CD4-positive, alpha-beta memory T cell (primary cell): ENCODE measurements at regions of chr5 and their contacts with region 1.

Region 1: DNA sequence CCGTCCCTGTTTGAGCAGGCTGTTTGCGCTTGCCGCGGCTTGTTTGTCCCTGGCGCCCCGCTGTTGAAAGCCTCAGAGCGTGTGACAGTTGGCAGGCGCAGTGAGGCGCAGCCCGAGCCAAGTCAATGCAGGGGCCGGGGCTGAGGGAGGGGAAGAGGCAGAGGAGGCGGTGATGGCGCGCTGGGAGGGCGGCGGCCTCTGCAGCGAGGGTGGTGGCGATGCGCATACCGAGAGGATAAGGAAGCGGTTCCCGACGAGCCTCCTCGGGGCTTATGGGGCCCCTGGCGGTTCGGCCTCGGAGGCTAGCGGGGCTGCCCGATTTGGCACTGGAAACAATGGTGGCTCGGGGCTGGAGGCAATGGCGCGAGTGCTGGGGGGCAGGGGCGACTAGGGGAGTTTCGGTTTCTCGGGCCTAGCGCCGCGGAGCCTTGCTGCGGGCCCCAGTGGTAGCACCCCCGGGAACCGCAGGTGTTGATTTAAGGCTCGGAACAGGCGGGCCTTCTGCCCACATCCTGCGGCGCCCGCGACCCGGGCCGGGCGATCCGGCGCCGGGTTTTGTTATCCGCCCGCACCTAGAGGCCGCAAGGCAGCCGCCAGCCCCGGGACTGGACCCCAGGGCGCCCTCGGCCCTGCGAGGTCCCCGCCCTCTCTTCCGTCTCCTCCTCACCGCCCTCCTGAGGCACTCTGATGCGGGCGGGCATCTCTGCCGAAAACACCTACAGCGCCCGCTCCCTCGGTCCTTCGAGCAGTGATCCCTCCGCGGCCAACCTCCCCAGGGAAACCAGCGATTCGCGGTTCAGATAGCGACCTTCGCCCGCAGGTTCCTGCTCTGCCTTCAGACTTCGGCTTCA is 947 bp upstream of the LNPEP start:
- DNase-seq: peak; percentile 95 to 98 (median 98)
- H3K4me3 ChIP-seq: peak overlapping the region; percentile 60 to 97
- H3K4me3 Mint-ChIP-seq: peak overlapping the region; percentile 88 to 99 (median 94)
- H3K27ac ChIP-seq: peak overlapping the region; percentile 83
- H3K27ac Mint-ChIP-seq: peak overlapping the region; percentile 93 to 99 (median 97)
- H3K4me1 ChIP-seq: peaks cover 72% of the 10 kb centered on the region
- H3K4me1 Mint-ChIP-seq: peaks cover 43 to 82% (median 61%) of the 10 kb centered on the region in 4 donors
- H3K27me3 ChIP-seq: no peaks in the 10 kb centered on the region
- H3K27me3 Mint-ChIP-seq: no peaks in the 10 kb centered on the region

Region 2: DNA sequence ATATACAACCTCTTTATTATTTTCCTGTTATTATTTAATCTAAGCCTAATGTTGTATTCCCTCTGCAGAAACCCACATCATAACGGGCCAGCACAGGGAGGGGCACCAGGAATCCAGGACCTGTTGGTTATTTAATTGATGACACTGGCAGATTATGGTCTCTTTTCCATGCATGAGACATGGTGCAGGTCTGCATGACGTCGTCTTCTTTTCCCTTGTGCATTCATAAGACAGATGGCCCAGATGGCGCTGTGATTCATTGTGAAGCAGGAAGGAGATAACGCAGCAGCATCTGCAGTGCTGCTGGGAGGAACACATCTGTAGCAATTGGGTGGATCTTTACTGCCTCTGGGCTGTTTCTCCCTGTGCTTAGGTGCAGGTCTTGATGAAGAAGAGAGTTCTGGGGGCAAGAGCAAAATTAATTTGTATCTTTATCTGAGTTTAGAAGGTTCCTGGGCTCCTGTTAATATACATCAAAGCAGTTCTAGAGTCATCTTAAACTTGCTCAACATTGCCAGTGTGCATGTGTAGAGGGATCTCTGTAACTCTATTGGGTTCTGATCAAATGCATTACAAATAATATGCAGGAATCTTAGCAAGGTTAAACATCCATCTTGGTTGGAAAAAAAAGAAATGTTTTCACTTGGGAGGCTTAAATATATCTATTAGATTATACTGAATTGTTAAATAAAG is 678.0 kb before region 1 on chr5:
- CTCF ChIA-PET with region 1: no interaction called
- POLR2A ChIA-PET with region 1: no interaction called
- intact Hi-C with region 1: no loop called
- DNase-seq: no peak
- H3K4me3 ChIP-seq: no peak overlapping the region
- H3K4me3 Mint-ChIP-seq: no peak overlapping the region
- H3K27ac ChIP-seq: no peak overlapping the region
- H3K27ac Mint-ChIP-seq: no peak overlapping the region
- H3K4me1 ChIP-seq: no peaks in the 10 kb centered on the region
- H3K4me1 Mint-ChIP-seq: no peaks in the 10 kb centered on the region
- H3K27me3 ChIP-seq: no peaks in the 10 kb centered on the region
- H3K27me3 Mint-ChIP-seq: peaks cover 0 to 4% of the 10 kb centered on the region in 2 donors

Region 3: DNA sequence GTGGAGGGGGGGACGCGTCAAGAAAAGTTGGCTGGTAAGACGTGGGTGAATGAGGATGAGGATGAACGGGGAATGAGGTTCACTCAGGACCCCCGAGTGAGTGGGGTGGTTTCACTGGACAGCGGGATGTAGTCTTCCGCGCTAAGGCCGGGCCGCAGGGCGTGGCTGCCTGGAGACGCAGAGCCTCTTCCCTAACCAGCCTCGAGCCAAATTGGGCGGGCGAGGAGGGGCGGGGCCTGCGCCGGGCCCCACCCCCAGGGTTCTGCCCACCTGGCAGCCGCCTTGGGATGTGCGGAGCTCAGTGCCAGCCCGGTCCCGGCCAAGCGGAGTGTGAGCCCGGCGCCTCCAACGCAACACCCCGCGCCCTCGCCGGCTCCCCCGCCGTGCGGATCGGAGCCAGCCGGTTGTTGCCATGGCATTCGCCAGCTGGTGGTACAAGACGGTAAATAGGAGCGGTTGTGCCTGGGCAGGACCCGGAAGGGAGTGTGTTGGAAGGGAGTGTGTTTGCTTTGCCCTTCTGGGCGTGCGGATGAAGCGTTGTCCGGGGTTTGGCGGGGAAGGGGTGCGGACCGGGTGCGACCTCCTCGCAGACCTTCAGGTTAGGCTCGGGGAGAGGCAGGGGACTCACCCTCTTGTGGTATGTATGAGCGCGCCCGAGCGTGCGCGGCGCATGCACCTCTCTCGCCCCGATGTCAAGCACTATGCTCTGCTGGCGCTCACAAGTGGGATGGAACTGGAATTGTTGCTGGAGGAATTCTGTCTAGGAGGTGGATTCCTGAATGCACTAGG is 272.0 kb before region 1 on chr5:
- CTCF ChIA-PET with region 1: interaction called, 4 read pairs
- POLR2A ChIA-PET with region 1: interaction called, 16 read pairs
- intact Hi-C with region 1: loop called (anchors 2 kb)
- DNase-seq: peak; percentile 84 to 89 (median 86)
- H3K4me3 ChIP-seq: peak overlapping the region; percentile 59 to 89
- H3K4me3 Mint-ChIP-seq: peak overlapping the region; percentile 96 to 98 (median 97)
- H3K27ac ChIP-seq: peak overlapping the region; percentile 93
- H3K27ac Mint-ChIP-seq: peak overlapping the region; percentile 96 to 99 (median 98)
- H3K4me1 ChIP-seq: peaks cover 48% of the 10 kb centered on the region
- H3K4me1 Mint-ChIP-seq: peaks cover 36 to 69% (median 53%) of the 10 kb centered on the region in 4 donors
- H3K27me3 ChIP-seq: no peaks in the 10 kb centered on the region
- H3K27me3 Mint-ChIP-seq: no peaks in the 10 kb centered on the region

Region 4: DNA sequence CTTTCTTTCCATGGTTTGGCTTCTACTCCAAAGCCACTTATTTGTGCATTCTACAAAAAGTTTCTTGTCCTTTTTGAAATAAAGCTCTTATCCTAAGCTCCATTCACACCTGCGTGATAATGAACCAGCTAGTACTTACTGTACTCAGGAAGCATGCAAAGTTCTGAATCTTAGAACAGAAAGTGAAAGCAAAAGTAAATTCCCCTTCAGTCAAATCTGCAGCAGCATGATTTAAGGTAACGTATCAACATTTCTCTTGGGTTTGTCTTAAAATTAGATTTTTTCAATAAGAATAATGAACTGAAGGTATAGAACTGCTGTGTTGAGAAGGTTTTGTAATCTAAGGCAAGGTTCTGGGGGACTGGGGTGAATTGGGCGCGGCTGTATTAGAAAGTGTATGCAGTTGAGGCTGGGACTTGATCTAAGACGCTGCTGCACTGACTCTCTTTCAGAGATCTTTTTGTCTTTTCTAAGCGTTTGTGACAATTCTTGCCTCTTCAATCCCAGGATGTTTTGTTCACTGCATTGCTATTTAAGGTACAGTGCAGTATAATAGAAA is 58.6 kb before region 1 on chr5 and contains the start of gene ERAP2:
- CTCF ChIA-PET with region 1: interaction called, 6 read pairs
- POLR2A ChIA-PET with region 1: interaction called, 84 read pairs
- intact Hi-C with region 1: loop called (anchors 1 kb)
- DNase-seq: peak; percentile 49 to 69 (median 65)
- H3K4me3 ChIP-seq: peak within 1 kb of the TSS; percentile 79 to 92
- H3K4me3 Mint-ChIP-seq: peak within 1 kb of the TSS; percentile 90 to 99 (median 96)
- H3K27ac ChIP-seq: peak within 1 kb of the TSS; percentile 79
- H3K27ac Mint-ChIP-seq: peak within 1 kb of the TSS; percentile 89 to 99 (median 97)
- H3K4me1 ChIP-seq: peaks cover 61% of the 10 kb centered on the region
- H3K4me1 Mint-ChIP-seq: peaks cover 45 to 80% (median 49%) of the 10 kb centered on the region in 4 donors
- H3K27me3 ChIP-seq: no peaks in the 10 kb centered on the region
- H3K27me3 Mint-ChIP-seq: no peaks in the 10 kb centered on the region
- total RNA-seq, gene ERAP2: 107 to 112 TPM

Region 5: DNA sequence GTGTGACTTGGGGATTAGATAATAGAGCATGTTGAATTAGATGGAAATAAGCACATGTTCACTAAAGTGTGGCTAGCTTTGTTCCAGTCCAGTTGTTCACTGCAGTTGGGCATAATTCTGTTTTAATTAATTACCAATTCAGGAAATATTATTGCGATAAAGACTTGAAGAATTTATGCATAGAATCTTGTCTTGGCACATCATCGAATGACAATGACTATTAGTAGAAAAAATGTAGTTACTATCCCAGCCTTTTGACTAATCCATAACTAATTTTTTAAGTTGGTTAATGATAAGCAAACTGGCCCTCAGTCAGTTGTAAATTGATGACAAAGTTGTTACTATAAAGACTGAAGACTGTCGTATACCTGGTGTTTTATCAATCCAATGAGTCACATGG is 11.4 kb after region 1 on chr5:
- CTCF ChIA-PET with region 1: interaction called, 4 read pairs
- POLR2A ChIA-PET with region 1: interaction called, 19 read pairs
- intact Hi-C with region 1: loop called (anchors 1 kb)
- DNase-seq: no peak
- H3K4me3 ChIP-seq: no peak overlapping the region
- H3K4me3 Mint-ChIP-seq: peak overlapping the region in 5 of 8 donors; percentile 2 to 55 (median 36)
- H3K27ac ChIP-seq: no peak overlapping the region
- H3K27ac Mint-ChIP-seq: peak overlapping the region in 3 of 7 donors; percentile 26 to 63 (median 49)
- H3K4me1 ChIP-seq: peaks cover 64% of the 10 kb centered on the region
- H3K4me1 Mint-ChIP-seq: peaks cover 49 to 83% (median 68%) of the 10 kb centered on the region in 4 donors
- H3K27me3 ChIP-seq: no peaks in the 10 kb centered on the region
- H3K27me3 Mint-ChIP-seq: no peaks in the 10 kb centered on the region

Region 6: DNA sequence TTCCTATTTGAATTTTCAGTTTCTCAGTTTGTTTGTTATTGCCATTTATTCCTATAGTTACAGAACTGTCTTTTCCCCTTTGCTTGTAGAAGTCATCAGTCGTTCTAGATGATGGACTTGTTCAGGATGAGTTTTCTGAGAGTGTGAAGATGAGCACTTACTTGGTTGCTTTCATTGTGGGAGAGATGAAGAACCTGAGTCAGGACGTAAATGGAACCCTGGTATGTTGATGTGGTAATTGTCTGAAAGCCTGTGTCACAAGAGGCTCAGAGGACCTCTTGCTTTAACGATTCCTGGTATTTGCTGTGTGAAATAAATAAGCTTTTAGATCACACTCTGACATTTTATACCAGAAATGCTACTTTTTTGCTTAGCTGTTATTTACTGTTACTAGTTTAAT is 51.5 kb after region 1 on chr5:
- CTCF ChIA-PET with region 1: interaction called, 5 read pairs
- POLR2A ChIA-PET with region 1: interaction called, 15 read pairs
- intact Hi-C with region 1: no loop called
- DNase-seq: no peak
- H3K4me3 ChIP-seq: no peak overlapping the region
- H3K4me3 Mint-ChIP-seq: no peak overlapping the region
- H3K27ac ChIP-seq: no peak overlapping the region
- H3K27ac Mint-ChIP-seq: peak overlapping the region in 3 of 7 donors; percentile 1 to 82 (median 30)
- H3K4me1 ChIP-seq: peaks cover 12% of the 10 kb centered on the region
- H3K4me1 Mint-ChIP-seq: peaks cover 26 to 65% (median 47%) of the 10 kb centered on the region in 4 donors
- H3K27me3 ChIP-seq: no peaks in the 10 kb centered on the region
- H3K27me3 Mint-ChIP-seq: no peaks in the 10 kb centered on the region

Region 7: DNA sequence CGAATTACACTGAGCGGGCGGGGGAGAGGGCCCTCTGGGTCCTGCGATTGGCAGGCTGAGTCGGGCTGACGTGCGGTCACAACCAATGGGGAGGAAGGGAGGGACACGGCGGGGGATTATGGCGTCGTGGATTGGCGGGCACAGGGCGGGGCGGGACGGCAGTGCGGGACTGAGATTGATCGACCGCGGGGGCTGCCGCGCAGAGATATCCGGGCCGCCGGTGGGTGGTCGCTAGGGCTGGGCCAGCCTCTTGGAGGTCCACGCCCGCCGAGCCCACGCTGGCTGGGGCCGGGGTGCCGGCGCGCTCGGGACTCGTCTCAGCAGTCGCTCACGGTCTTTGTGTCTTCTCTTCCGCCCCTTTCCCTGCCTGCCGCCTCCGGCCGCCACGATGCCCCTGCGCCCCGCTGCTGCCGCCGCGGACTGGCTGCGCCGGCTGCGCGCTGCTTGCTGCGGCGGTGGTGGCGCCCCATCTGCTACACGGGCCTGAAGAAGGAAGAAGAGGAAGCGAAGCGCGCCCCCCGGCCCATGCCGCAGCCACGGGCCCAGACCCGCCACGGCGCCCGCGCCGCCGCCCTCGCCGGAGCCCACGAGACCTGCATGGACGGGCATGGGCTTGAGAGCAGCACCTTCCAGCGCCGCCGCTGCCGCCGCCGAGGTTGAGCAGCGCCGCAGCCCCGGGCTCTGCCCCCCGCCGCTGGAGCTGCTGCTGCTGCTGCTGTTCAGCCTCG is 1838.7 kb after region 1 on chr5 and contains the start of gene RGMB:
- CTCF ChIA-PET with region 1: no interaction called
- POLR2A ChIA-PET with region 1: no interaction called
- intact Hi-C with region 1: loop called (anchors 1 kb)
- DNase-seq: peak; percentile 87 to 95 (median 89)
- H3K4me3 ChIP-seq: peak within 1 kb of the TSS; percentile 71 to 73
- H3K4me3 Mint-ChIP-seq: peak within 1 kb of the TSS; percentile 94 to 99 (median 98)
- H3K27ac ChIP-seq: peak within 1 kb of the TSS; percentile 59
- H3K27ac Mint-ChIP-seq: peak within 1 kb of the TSS; percentile 89 to 98 (median 94)
- H3K4me1 ChIP-seq: peaks cover 48% of the 10 kb centered on the region
- H3K4me1 Mint-ChIP-seq: peaks cover 34 to 70% (median 50%) of the 10 kb centered on the region in 4 donors
- H3K27me3 ChIP-seq: peaks cover 5% of the 10 kb centered on the region
- H3K27me3 Mint-ChIP-seq: peaks cover 2 to 3% of the 10 kb centered on the region in 2 donors
- total RNA-seq, gene RGMB: 16.5 to 17.0 TPM